Gastrocnemius medialis (tissue), 4 donors: ENCODE measurements at regions of chrX and their contacts with region 1.

Region 1: GRCh38 chrX:154097597-154098541 is at the start of gene MECP2:
- DNase-seq: peak; percentile 86 to 91
- ATAC-seq: peak; percentile 80 to 86
- H3K4me3 ChIP-seq: peak within 1 kb of the TSS; percentile 62 to 72 (median 68)
- H3K27ac ChIP-seq: peak within 1 kb of the TSS; percentile 90 to 99 (median 94)
- H3K4me1 ChIP-seq: peaks cover 31 to 39% of the 10 kb centered on the region in 2 donors
- H3K27me3 ChIP-seq: no peaks in the 10 kb centered on the region
- CTCF ChIP-seq: no peak
- POLR2A ChIP-seq: peak; percentile 52 to 60
- total RNA-seq, gene MECP2: 39.0 to 63.2 (median 45.2) TPM

Region 2: DNA sequence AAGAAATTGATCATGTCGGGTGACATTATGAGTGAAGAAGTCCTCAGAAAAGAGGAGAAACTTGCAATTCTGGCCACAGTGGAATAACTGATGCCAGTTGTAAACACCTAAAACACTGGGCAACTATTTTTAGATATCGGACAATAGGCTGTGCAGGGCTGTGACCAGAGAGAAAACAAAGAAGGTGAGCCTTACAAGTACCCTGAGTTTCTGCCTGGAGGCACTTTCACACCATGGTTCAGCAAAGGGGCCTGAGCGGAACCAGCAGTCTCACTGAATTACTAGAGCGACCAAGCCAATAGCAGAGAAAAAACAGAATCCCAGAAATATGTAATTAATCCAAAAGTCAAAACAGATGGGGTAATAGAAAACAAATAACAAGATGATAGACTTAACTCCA is 89.3 kb before region 1 on chrX:
- in situ Hi-C with region 1: no loop called
- intact Hi-C with region 1: no loop called
- DNase-seq: no peak
- ATAC-seq: no peak
- H3K4me3 ChIP-seq: no peak overlapping the region
- H3K27ac ChIP-seq: peak overlapping the region in 1 of 4 donors; percentile 80
- H3K4me1 ChIP-seq: peaks cover 3 to 6% of the 10 kb centered on the region in 2 donors
- H3K27me3 ChIP-seq: no peaks in the 10 kb centered on the region
- CTCF ChIP-seq: no peak
- POLR2A ChIP-seq: no peak

Region 3: DNA sequence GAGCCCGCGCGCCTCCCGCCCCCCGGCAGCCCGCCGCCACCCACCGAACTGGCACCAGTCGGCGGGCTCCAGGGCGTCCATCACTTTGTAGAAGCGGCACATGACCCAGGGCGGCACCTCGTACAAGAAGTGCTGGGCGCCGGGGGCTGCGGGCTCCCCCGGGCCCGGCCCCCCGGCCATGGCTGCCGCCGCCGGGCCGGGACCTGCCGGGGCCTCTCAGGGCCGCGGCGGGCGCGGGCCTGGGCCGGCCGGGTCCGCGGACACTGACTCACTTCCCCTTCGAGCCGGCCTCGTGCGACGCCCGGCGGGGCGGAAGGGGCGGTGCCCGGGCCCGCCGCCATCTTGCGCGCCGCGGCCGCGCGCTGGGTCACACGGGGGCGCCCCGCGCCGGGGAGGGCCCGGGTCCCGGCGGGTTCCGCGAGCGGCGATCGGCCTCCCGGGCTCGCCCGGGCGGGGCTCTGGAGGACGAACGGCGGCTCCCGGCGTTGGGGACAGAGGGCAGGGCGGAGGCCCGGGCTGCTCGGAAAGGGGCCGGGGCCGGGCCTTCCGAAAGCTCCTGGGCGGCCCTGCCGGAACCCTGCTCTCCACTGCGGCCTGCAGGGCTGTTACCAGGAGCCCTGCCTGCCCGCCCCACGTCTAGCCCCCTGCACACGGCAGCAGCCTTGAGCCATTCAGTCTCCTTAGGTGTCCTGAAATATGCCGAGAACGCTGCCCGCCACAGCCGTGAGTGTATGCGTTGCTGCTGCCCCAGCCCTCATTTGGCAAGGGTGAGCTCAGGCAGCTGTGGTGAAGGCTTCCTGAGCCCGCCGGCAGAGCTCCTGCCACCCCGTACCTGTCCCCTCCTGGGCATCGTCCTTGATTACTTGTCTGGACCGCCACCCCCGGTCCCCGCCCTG is 78.0 kb before region 1 on chrX and contains the start of gene IRAK1:
- in situ Hi-C with region 1: no loop called
- intact Hi-C with region 1: loop called (anchors 5 kb)
- DNase-seq: peak in 1 of 2 donors; percentile 57
- ATAC-seq: peak; percentile 86
- H3K4me3 ChIP-seq: peak within 1 kb of the TSS; percentile 56 to 65 (median 62)
- H3K27ac ChIP-seq: peak within 1 kb of the TSS; percentile 87 to 93 (median 89)
- H3K4me1 ChIP-seq: peaks cover 4% of the 10 kb centered on the region in 2 donors
- H3K27me3 ChIP-seq: no peaks in the 10 kb centered on the region
- CTCF ChIP-seq: no peak
- POLR2A ChIP-seq: peak; percentile 68 to 88
- total RNA-seq, gene IRAK1: 73.9 to 157 (median 115) TPM

Region 4: DNA sequence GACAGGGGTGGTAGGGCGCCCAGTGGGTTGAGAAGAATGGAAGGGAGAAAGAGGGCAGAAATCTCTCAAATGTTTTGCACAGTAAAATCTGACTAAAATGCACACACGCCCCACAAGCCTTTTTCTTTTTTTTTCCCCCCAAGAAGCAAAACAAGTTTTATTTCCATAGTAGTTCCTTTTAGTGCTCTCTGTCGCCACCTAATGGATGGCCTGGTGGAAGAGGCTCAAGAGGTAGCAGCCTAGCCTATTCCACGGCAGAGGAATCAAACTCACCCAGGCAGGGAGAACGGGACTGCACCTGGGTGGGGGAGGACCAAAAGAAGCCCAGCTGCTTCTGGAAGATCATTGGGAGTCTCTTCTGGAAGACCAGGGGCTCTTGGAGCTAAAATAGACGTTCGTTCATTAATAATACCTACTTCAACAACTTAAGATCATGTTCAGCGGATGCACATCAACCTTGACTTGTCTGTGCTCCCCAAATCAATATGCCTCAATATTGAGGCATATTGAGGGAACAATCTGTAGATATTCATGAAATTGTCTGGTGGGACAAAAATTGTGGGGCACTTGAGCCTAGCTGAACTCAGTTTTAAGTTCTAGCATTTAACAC is 46.6 kb before region 1 on chrX:
- in situ Hi-C with region 1: no loop called
- intact Hi-C with region 1: loop called (anchors 5 kb)
- DNase-seq: peak; percentile 29 to 66
- ATAC-seq: peak; percentile 34 to 39
- H3K4me3 ChIP-seq: peak overlapping the region in 1 of 4 donors; percentile 36
- H3K27ac ChIP-seq: peak overlapping the region; percentile 82 to 89 (median 88)
- H3K4me1 ChIP-seq: peaks cover 39 to 49% of the 10 kb centered on the region in 2 donors
- H3K27me3 ChIP-seq: no peaks in the 10 kb centered on the region
- CTCF ChIP-seq: peak in 4 of 5 experiments; percentile 61 to 80 (median 63)
- POLR2A ChIP-seq: no peak

Region 5: DNA sequence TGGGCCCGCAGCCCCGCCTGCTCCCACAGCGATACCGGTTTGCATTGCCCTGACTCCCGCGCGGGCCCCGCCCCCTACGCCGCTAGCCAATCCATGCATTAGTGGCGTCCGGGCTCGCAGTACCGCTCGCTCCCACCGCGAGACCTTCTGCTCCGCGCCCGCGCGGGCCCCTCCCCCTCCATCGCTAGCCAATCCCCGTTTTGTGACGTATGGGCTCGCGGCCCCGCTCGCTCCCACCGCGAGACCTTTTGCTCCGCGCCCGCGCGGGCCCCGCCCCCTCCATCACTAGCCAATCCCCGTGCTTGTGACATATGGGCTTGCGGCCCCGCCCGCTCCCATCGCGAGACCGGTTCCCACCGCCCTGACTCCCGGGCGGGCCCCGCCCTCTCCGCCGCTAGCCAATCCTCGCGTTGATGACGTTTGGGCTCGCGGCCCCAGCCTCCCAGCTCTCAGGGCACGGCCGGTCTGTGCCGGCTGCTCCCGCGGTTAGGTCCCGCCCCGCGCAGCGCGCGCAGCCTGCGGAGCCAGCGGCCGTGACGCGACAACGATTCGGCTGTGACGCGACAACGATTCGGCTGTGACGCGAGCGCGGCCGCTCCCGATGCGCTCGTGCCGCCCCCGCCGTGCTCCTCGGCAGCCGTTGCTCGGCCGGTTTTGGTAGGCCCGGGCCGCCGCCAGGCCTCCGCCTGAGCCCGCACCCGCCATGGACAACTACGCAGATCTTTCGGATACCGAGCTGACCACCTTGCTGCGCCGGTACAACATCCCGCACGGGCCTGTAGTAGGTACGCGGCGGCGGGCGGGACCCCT is 281.1 kb after region 1 on chrX and contains the start of gene EMD:
- in situ Hi-C with region 1: no loop called
- intact Hi-C with region 1: loop called (anchors 5 kb)
- DNase-seq: peak; percentile 95 to 98
- ATAC-seq: peak; percentile 79 to 84
- H3K4me3 ChIP-seq: peak within 1 kb of the TSS; percentile 67 to 84 (median 69)
- H3K27ac ChIP-seq: peak within 1 kb of the TSS; percentile 87 to 99 (median 96)
- H3K4me1 ChIP-seq: peaks cover 5 to 13% of the 10 kb centered on the region in 2 donors
- H3K27me3 ChIP-seq: no peaks in the 10 kb centered on the region
- CTCF ChIP-seq: peak in 1 of 5 experiments; percentile 5
- POLR2A ChIP-seq: peak; percentile 89 to 93
- total RNA-seq, gene EMD: 36.2 to 61.5 (median 53.2) TPM